ENCODE measurements at regions of chr12 and their contacts with region 1.

Region 1: DNA sequence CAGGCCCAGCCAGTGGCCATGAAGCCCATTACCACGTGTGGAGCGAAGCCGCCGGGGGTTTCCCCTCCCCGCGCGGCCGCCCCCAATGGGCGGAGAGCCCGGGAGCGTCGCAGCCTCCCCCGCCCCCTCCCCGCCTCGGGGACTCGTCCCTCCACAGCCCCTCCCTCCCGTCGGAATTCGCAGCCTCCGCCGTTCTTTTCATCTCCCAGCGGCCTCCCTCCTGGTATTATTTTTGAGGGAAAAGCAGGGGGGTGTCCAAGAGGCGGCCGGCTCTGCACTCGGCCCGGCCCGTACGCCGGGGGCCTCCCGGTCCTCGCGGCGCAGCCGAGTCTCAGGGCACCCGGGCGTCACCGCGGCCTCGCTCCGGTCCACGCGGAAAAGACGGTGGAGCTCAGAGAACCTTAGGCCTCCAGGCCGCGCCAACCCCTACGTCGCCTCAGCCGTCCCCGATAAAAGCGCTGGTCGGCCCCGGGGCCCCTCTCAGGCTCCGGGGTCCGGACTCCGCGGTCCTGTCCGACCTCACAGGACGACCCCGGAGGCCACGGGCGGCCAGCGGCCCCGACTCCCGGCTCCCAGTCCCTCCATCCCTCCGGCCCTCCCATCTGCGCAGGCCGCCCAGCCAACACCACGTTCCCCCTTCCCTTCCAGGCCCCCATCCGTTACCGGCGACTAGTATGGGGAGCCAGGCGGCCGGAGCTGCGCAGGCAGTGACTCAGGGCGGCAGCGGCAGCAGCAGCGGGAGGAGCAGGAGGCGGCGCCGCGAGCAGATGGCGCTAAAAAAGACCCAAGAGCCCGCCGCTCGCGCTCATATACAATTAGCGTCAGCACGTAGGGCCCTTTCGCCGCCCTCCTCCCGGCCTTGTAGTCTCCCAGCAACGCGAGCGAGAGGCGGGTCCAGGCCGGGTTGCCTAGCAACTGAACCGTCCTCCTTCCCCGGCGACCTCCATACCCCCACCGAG is at the start of gene NAP1L1:
- DNase-seq: peak; percentile 99
- H3K4me3 Mint-ChIP-seq: peak within 1 kb of the TSS; percentile 100
- H3K27ac Mint-ChIP-seq: peak within 1 kb of the TSS; percentile 100
- H3K4me1 Mint-ChIP-seq: peaks cover 42% of the 10 kb centered on the region
- H3K27me3 Mint-ChIP-seq: no peaks in the 10 kb centered on the region
- total RNA-seq, gene NAP1L1: 652 and 689 TPM in 2 replicates

Region 2: DNA sequence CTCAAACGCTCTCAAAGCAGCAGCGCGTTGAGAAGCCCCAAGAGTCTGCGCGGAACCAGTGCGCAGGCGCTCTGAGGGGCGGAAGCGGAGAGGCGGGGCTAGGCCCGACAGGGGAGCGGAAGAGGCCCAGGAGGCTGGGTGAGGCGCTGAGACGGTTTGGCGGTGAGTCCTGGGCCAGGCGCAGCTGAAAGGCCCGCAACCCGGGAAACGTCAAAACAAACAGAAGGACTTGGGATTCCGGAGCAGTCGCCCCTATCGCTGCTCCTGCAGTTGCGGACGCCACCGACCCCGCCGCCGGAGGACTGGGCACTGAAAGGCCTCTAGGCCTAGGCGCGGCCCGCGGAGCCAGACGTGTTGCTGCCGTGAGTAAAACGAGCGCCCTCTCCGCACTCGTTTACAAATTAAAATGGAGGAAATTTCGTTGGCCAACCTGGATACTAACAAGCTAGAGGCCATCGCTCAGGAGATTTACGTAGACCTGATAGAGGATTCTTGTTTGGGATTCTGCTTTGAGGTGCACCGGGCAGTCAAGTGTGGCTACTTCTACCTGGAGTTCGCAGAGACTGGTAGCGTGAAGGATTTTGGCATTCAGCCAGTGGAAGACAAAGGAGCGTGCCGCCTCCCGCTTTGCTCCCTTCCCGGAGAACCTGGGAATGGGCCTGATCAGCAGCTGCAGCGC is 1546.3 kb before region 1 on chr12 and contains the start of gene ATXN7L3B:
- intact Hi-C with region 1: loop called (anchors 5 kb)
- DNase-seq: peak; percentile 99
- H3K4me3 Mint-ChIP-seq: peak within 1 kb of the TSS; percentile 98
- H3K27ac Mint-ChIP-seq: peak within 1 kb of the TSS; percentile 97
- H3K4me1 Mint-ChIP-seq: peaks cover 40% of the 10 kb centered on the region
- H3K27me3 Mint-ChIP-seq: no peaks in the 10 kb centered on the region
- total RNA-seq, gene ATXN7L3B: 23.9 and 24.6 TPM in 2 replicates

Region 3: GRCh38 chr12:75511116-75512048 is 572.8 kb before region 1 on chr12 and contains the start of gene KRR1:
- intact Hi-C with region 1: loop called (anchors 1 kb)
- DNase-seq: peak; percentile 97
- H3K4me3 Mint-ChIP-seq: peak within 1 kb of the TSS; percentile 98
- H3K27ac Mint-ChIP-seq: peak within 1 kb of the TSS; percentile 100
- H3K4me1 Mint-ChIP-seq: peaks cover 31% of the 10 kb centered on the region
- H3K27me3 Mint-ChIP-seq: peaks cover 3% of the 10 kb centered on the region
- total RNA-seq, gene KRR1: 134 and 141 TPM in 2 replicates

Region 4: DNA sequence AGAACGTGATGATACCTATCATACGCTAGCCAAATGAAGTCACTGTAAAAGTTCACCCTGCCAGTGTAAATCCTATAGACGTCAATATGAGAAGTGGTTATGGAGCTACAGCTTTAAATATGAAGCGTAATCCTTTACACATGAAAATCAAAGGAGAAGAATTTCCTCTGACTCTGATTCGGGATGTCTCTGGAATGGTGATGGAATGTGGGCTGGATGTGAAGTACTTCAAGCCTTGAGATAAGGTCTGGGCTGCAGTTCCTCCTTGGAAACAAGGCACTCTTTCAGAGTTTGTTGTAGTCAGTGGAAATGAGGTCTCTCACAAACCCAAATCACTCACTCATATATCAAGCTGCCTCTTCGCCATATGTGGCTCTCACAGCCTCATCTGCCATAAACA is 53.4 kb after region 1 on chr12:
- intact Hi-C with region 1: no loop called
- DNase-seq: no peak
- H3K4me3 Mint-ChIP-seq: no peak overlapping the region
- H3K27ac Mint-ChIP-seq: no peak overlapping the region
- H3K4me1 Mint-ChIP-seq: peaks cover 2% of the 10 kb centered on the region
- H3K27me3 Mint-ChIP-seq: peaks cover 3% of the 10 kb centered on the region

Region 5: GRCh38 chr12:76158518-76159321 is 74.5 kb after region 1 on chr12:
- intact Hi-C with region 1: loop called (anchors 1 kb)
- DNase-seq: peak; percentile 91
- H3K4me3 Mint-ChIP-seq: peak overlapping the region; percentile 6
- H3K27ac Mint-ChIP-seq: peak overlapping the region; percentile 84
- H3K4me1 Mint-ChIP-seq: peaks cover 16% of the 10 kb centered on the region
- H3K27me3 Mint-ChIP-seq: peaks cover 30% of the 10 kb centered on the region

Region 6: GRCh38 chr12:76318773-76319730 is 234.9 kb after region 1 on chr12:
- intact Hi-C with region 1: no loop called
- DNase-seq: no peak
- H3K4me3 Mint-ChIP-seq: no peak overlapping the region
- H3K27ac Mint-ChIP-seq: no peak overlapping the region
- H3K4me1 Mint-ChIP-seq: no peaks in the 10 kb centered on the region
- H3K27me3 Mint-ChIP-seq: peaks cover 9% of the 10 kb centered on the region

Region 7: DNA sequence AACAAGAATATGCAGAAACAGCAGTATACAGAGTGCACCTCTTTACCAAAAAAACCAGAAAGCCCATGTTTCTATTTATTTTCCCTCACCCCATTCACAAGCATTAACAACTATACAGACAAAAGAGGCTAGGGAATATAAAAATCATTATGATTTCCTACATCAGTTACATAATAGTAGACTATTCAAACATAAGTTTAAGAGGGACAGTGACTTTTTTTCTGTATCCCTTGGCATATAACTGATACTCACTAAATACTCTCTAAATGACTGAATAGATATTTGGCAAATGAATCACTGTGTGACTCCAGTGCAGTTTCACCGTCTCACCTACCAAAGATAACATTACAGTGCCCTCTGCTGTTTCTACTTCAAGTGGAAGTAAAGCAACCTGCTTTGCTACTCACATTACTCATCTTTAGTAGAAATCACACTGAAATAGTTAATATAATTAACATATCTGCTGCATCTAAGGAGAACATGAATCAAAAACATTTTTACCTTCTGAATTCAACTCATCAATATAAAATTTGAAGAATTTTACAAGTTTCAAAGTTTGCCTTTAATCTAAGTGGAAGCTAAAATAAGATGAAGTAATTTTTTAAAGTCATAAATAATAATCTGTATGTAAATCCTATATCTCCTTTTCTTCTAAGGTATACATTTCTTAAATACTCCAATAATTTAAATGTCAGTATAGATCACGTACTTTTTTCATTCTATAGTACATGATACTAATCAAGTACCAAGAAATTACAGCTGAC is 371.6 kb after region 1 on chr12:
- intact Hi-C with region 1: loop called (anchors 2 kb)
- DNase-seq: peak; percentile 73
- H3K4me3 Mint-ChIP-seq: no peak overlapping the region
- H3K27ac Mint-ChIP-seq: no peak overlapping the region
- H3K4me1 Mint-ChIP-seq: peaks cover 14% of the 10 kb centered on the region
- H3K27me3 Mint-ChIP-seq: no peaks in the 10 kb centered on the region